ENCODE measurements at regions of chr5 and their contacts with region 1.

Region 1: DNA sequence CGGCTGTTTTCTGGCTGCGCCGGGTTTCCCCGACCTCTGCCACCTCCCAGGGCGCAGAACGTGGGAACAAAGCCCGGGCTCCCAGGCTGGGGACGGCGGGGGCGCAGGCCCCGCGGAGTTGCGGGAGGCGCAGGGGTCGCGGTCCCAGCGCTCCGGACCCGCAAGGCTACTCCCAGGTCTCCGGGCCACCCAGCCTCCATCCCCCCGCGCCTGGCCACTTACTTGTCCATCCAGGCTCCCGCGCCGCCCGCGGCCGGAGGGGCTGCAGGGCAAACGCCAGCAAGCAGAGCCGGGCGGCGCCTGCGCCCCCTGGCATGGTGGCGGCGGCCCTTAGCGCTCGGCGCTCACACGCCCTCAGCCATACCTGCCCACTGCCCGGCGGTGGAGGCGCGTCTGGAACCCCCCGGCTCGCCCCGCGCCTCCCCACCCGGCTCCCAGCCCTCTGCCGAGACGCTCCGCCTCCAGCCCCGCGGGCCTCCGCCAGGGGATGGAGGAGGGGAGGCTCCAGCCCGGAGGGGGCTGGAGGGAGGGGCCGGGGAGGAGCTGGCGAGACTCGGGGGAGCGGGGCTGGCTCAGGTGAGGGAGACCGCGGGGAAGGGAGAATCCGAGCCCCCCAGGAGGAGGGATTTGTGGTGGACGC is at the start of gene ADAM19:
- DNase-seq: peak; percentile 62 to 80
- H3K4me3 ChIP-seq: peak within 1 kb of the TSS; percentile 75
- H3K4me3 Mint-ChIP-seq: peak within 1 kb of the TSS; percentile 92
- H3K27ac Mint-ChIP-seq: peak within 1 kb of the TSS; percentile 50
- H3K4me1 ChIP-seq: peaks cover 37% of the 10 kb centered on the region
- H3K4me1 Mint-ChIP-seq: peaks cover 48% of the 10 kb centered on the region
- H3K27me3 ChIP-seq: no peaks in the 10 kb centered on the region
- H3K27me3 Mint-ChIP-seq: no peaks in the 10 kb centered on the region
- CTCF ChIP-seq: no peak
- total RNA-seq, gene ADAM19: 62.9 and 69.4 TPM in 2 replicates

Region 2: GRCh38 chr5:157558041-157558595 is 17.4 kb before region 1 on chr5:
- CTCF ChIA-PET with region 1: no interaction called
- POLR2A ChIA-PET with region 1: no interaction called
- intact Hi-C with region 1: loop called (anchors 2 kb)
- DNase-seq: peak in 1 of 2 experiments; percentile 41
- H3K4me3 ChIP-seq: no peak overlapping the region
- H3K4me3 Mint-ChIP-seq: no peak overlapping the region
- H3K27ac Mint-ChIP-seq: no peak overlapping the region
- H3K4me1 ChIP-seq: peaks cover 37% of the 10 kb centered on the region
- H3K4me1 Mint-ChIP-seq: peaks cover 36% of the 10 kb centered on the region
- H3K27me3 ChIP-seq: no peaks in the 10 kb centered on the region
- H3K27me3 Mint-ChIP-seq: no peaks in the 10 kb centered on the region
- CTCF ChIP-seq: no peak

Region 3: GRCh38 chr5:157592594-157592993 is 17.1 kb after region 1 on chr5:
- CTCF ChIA-PET with region 1: interaction called, 8 read pairs
- POLR2A ChIA-PET with region 1: no interaction called
- intact Hi-C with region 1: loop called (anchors 2 kb)
- DNase-seq: no peak
- H3K4me3 ChIP-seq: no peak overlapping the region
- H3K4me3 Mint-ChIP-seq: no peak overlapping the region
- H3K27ac Mint-ChIP-seq: no peak overlapping the region
- H3K4me1 ChIP-seq: peaks cover 39% of the 10 kb centered on the region
- H3K4me1 Mint-ChIP-seq: peaks cover 28% of the 10 kb centered on the region
- H3K27me3 ChIP-seq: no peaks in the 10 kb centered on the region
- H3K27me3 Mint-ChIP-seq: no peaks in the 10 kb centered on the region
- CTCF ChIP-seq: no peak

Measured in Caco-2 (cell line).